ENCODE measurements at regions of chr4 and their contacts with region 1.

Region 1: DNA sequence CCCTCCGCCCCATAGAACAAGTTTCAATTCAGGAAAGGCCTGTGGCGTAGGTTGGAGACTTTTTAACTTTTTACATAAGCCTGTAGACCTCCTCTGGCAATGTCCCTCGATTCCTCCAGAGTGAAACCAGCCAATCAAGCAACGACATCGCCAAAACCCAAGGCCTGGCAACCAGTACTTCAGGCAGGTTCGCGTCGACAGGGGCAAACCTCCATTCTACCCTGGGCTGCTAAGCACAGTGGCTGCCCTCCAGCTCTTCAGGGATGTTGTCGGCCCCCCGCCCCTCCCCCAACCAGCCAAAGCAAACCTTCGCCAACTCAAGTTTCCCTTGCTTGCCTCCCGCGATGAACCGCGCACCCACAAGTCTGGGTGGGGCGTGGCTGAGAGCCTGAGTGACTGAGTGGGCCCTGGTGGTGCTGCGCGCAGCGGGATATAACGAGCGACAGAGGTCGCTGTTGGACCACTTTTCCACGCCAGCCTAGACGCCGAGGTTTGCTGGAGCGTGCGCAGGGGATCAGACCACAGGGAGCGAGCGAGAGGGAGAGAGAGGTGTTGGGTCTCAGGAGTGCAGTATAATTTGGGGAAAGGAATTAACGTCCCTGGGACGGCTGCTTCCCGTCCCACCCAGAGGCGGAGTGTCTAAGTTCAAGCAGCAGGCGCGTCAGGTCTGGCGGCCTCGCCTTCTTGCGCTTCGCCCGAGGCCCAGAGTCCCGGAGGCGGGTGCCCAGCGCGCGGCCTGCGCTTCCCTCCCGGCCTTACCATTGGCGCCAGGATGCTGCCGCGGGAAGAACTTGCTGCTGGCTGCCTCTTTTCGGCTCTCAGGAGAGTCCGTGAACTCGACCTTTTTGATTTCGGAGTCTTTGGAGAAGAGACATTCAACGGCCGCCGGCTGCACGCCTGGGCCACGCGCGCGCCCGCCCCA is 9.0 kb upstream of the PITX2 start:
- DNase-seq: peak in 1 of 2 donors; percentile 53
- H3K4me3 ChIP-seq: peak overlapping the region; percentile 12 to 69 (median 44)
- H3K27ac ChIP-seq: no peak overlapping the region
- H3K4me1 ChIP-seq: peaks cover 6 to 7% of the 10 kb centered on the region in 2 donors
- H3K27me3 ChIP-seq: peaks cover 13 to 97% of the 10 kb centered on the region in 2 donors
- CTCF ChIP-seq: peak in 2 of 3 donors; percentile 73
- POLR2A ChIP-seq: no peak

Region 2: DNA sequence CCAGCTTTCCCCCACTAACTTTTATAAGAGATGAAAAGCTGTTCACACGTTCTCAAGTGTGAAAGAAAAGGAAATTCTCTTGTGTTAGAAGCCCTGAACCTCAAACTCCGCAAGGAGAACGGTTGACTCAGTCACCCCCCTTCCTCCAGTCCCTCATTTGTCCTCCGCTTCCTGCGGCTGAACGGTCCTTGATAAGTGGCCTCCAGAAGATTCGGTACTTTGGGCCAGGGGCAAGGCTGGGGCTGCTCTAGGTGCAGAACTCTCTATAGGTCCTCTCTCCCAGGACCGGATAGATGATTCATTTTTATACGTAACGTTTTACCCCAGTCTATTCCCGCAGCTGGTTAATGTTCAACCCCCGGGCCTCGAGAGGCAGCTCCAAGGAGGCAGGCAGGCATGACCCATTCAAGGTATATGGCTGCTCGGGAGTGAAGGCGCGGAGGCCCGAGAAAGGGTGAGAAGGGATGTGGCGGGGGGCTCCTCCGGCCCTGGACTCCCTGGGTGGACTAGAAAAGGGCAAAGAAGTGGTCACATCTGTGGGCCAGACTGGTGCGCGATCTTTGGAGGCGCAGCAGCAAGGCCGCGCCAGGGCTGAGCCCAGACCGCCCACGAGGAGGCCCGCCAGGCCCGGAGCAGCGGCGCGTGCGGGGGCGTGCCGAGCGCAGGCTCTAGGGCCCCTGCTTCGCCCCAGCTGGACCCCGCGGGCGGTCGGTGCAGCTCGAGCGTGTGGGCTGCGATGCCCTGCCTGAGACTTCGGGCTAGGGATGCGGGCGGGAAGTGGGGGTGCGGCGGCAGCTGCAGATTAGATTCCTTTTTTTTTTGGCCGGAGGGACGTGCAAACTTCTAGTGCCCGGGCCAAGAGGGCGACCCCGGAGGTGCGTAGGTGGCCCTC is 20.7 kb before region 1 on chr4:
- intact Hi-C with region 1: loop called (anchors 1 kb)
- DNase-seq: no peak
- H3K4me3 ChIP-seq: peak overlapping the region in 2 of 3 donors; percentile 21 to 56
- H3K27ac ChIP-seq: no peak overlapping the region
- H3K4me1 ChIP-seq: no peaks in the 10 kb centered on the region
- H3K27me3 ChIP-seq: peaks cover 8 to 77% of the 10 kb centered on the region in 2 donors
- CTCF ChIP-seq: no peak
- POLR2A ChIP-seq: no peak

Region 3: DNA sequence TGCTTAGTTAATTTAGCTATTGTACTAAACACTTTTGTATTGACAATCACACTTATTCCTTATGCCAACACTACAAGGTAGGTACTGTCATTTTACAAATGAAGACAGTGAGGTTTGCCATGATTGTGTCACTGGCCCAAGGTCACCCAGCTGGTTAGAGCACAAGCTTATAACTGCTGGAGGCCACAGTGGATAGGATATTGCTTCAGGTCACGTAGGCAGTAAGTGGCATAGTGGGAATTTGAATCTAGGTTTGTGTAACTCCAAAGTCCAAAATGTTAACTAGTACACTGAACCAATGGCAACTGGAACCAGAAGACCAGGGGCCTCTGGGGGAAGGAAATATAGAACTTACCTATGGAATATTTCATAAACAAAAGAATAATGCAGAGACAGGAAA is 12.2 kb after region 1 on chr4:
- intact Hi-C with region 1: no loop called
- DNase-seq: no peak
- H3K4me3 ChIP-seq: no peak overlapping the region
- H3K27ac ChIP-seq: no peak overlapping the region
- H3K4me1 ChIP-seq: no peaks in the 10 kb centered on the region
- H3K27me3 ChIP-seq: peaks cover 0 to 55% of the 10 kb centered on the region in 2 donors
- CTCF ChIP-seq: no peak
- POLR2A ChIP-seq: no peak

Region 4: DNA sequence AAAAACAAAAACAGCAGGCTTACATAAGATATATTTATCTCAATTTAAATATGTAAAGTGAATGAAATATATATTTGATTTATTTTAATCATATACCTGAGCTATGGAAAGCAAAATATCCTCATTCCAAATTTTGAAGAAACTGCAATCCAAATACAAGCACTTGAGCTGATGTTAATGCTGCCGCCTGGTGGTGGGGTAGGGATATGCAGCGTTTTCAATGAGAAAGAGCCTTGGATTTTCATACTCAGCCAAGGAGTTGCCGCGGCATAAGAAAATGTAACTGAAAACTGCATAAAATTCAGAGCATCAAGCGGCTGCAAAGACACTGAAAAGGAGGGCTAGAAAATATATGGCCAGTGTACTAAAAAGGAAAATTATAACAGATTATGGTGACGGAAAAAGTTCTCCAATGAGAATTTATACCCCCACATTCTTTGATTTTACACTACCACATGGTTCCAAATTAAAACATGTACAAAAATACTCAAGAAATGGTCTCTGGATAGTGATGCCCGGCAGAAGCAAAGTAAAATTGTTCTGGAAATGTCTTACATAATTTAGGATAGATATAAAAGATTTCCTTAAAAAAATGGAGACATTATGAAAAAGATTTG is 651.3 kb after region 1 on chr4:
- intact Hi-C with region 1: loop called (anchors 10 kb)
- DNase-seq: peak; percentile 19 to 63
- H3K4me3 ChIP-seq: no peak overlapping the region
- H3K27ac ChIP-seq: no peak overlapping the region
- H3K4me1 ChIP-seq: no peaks in the 10 kb centered on the region
- H3K27me3 ChIP-seq: peaks cover 0 to 4% of the 10 kb centered on the region in 2 donors
- CTCF ChIP-seq: peak; percentile 52 to 62 (median 56)
- POLR2A ChIP-seq: no peak